Ovary (tissue), 10 donors: ENCODE measurements at regions of chr6 and their contacts with region 1.

Region 1: GRCh38 chr6:41027799-41028628 is 11.0 kb downstream of the UNC5CL start:
- DNase-seq: peak; percentile 83 to 93 (median 92)
- H3K4me3 ChIP-seq: peak overlapping the region; percentile 44
- H3K27ac ChIP-seq: peak overlapping the region; percentile 63 to 85
- H3K4me1 ChIP-seq: peaks cover 4% of the 10 kb centered on the region
- H3K27me3 ChIP-seq: no peaks in the 10 kb centered on the region
- CTCF ChIP-seq: peak; percentile 98 to 99 (median 99)
- EP300 ChIP-seq: no peak
- POLR2A ChIP-seq: no peak

Region 2: GRCh38 chr6:39980839-39981580 is 1047.0 kb before region 1 on chr6:
- intact Hi-C with region 1: loop called in 1 of 4 experiments (anchors 10 kb)
- DNase-seq: peak in 1 of 5 donors; percentile 24
- H3K4me3 ChIP-seq: no peak overlapping the region
- H3K27ac ChIP-seq: no peak overlapping the region
- H3K4me1 ChIP-seq: no peaks in the 10 kb centered on the region
- H3K27me3 ChIP-seq: no peaks in the 10 kb centered on the region
- CTCF ChIP-seq: peak in 2 of 3 donors; percentile 45 to 52
- EP300 ChIP-seq: no peak
- POLR2A ChIP-seq: no peak

Region 3: DNA sequence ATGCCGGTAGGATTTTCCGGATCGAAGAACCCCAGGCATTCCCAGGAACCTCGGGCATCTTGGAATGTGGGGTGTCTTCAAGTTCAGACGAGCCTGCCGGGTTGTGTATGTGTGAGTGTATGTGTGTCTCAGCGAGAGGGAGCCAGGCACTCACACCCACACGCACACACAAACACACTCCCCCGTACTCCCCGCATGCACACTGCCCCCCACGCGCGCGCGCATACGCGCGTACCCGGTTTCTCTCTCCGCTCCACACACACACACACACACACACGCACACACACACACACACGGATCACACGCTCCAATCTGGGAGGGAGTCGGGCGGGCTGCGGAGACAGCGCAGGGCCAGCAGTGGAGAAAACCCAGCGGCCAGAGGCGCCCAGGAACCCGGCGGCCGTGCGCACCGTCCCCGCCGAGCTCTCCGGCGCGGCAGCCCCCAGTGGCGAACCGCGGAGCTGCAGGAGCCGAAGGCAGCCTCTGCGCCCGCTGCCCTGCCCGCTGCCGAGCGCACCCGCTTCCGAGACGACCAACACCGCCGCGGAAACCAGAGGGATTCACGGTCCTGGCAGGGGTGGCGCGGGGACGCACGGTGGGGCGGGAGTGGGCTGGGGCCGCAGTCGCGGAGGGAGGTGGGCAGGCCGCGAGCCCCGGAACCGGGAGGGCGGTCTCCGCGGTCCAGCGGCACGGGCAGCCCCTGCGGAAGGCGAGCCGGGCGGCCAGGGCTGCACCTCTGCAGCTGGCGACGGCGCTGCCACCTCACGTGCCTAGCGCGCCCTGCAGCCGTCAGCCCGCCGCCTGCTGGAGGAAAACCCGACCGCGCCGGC is 440.6 kb before region 1 on chr6 and contains the start of gene LRFN2:
- intact Hi-C with region 1: loop called in 1 of 4 experiments (anchors 10 kb)
- DNase-seq: peak; percentile 74 to 89 (median 83)
- H3K4me3 ChIP-seq: peak within 1 kb of the TSS; percentile 33
- H3K27ac ChIP-seq: peak within 1 kb of the TSS in 1 of 2 donors; percentile 71
- H3K4me1 ChIP-seq: peaks cover 2% of the 10 kb centered on the region
- H3K27me3 ChIP-seq: no peaks in the 10 kb centered on the region
- CTCF ChIP-seq: peak; percentile 37 to 86 (median 81)
- EP300 ChIP-seq: no peak
- POLR2A ChIP-seq: no peak
- total RNA-seq, gene LRFN2: 0.34 to 2.2 (median 0.66) TPM

Region 4: DNA sequence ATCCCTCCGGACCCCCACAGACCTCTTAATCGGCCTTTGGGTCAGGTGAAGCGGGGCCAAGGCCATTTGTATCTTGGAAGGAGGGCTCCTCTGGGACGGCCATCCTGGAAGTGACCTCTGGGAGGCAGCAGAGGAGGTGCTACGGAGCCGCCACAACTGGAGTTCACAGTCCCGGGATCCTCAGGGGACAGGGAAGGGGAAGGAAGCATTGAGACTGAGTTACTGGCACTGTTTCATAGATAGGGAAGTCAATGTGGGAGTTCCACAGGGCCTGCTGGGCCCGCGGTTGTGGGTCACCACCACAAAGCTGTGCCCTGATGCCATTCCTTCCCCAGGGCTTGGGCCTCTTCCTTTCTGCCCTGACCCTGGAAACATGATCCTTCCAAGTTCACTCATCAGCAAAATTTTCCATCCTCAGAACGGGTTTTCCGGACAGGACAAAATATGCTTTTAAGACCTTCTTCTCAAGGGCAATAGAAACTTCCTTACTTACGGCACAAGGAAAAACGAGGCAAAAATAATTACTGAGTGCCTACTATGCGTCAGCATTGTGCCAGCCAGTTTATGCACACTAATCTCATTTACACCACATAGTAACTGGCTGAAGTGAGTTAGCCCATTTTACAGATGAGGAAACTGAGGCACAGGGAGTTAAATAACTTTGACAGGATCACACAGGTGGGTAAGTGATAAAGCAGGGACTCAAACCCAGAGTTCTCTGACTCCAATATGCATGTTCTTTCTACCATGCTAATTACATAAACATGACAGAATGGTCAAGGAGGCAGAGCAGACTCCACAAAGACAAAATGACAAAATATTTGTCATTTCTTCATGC is 132.8 kb before region 1 on chr6:
- intact Hi-C with region 1: loop called in 3 of 4 experiments (anchors 5 to 10 kb)
- DNase-seq: peak; percentile 53 to 66 (median 57)
- H3K4me3 ChIP-seq: no peak overlapping the region
- H3K27ac ChIP-seq: peak overlapping the region in 1 of 2 donors; percentile 32
- H3K4me1 ChIP-seq: peaks cover 19% of the 10 kb centered on the region
- H3K27me3 ChIP-seq: no peaks in the 10 kb centered on the region
- CTCF ChIP-seq: peak; percentile 20 to 51 (median 20)
- EP300 ChIP-seq: no peak
- POLR2A ChIP-seq: no peak